ENCODE measurements at regions of chr7 and their contacts with region 1.

Region 1: DNA sequence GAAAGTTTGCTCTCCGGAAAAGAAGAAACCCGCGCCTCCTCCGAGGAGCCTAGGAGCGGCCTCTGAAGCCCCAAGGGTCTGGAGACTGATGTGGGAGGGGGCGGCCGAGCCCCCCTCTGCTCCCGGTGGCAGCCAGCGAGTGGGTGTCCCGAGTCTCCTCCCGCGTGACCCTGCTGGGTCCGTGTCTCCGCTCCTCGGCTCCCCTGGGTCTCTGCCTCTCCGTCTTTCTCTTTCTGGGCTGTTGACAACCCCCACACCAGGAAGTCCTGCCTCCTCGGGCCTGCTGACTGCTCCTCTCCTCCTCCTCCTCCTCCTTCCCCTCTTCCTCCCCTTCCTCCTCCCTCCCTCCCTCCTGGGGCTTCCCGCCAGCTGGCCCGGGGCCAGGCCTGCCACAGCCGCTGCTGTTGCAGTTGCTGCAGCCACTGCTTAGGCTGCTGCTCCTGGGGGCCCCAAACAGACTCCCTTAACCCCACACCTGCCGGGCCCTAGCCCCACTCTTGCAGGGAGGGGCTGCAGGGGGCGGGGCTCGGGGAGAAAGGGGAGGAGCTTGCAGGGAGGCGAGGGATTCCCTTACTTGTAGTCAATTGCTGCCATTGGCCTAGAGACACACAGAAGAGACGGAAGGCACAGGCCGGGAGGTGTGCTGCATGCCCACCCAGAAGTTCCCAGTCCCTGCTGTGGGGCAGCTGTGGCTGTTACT is at the start of gene TSC22D4:
- DNase-seq: peak; percentile 91
- ATAC-seq: peak; percentile 87 to 93
- total RNA-seq, gene TSC22D4: 31.3 to 36.2 TPM

Region 2: GRCh38 chr7:100545360-100546128 is 66.4 kb after region 1 on chr7:
- intact Hi-C with region 1: loop called in 1 of 2 experiments (anchors 5 kb)
- DNase-seq: peak; percentile 52
- ATAC-seq: peak; percentile 77 to 90

Region 3: DNA sequence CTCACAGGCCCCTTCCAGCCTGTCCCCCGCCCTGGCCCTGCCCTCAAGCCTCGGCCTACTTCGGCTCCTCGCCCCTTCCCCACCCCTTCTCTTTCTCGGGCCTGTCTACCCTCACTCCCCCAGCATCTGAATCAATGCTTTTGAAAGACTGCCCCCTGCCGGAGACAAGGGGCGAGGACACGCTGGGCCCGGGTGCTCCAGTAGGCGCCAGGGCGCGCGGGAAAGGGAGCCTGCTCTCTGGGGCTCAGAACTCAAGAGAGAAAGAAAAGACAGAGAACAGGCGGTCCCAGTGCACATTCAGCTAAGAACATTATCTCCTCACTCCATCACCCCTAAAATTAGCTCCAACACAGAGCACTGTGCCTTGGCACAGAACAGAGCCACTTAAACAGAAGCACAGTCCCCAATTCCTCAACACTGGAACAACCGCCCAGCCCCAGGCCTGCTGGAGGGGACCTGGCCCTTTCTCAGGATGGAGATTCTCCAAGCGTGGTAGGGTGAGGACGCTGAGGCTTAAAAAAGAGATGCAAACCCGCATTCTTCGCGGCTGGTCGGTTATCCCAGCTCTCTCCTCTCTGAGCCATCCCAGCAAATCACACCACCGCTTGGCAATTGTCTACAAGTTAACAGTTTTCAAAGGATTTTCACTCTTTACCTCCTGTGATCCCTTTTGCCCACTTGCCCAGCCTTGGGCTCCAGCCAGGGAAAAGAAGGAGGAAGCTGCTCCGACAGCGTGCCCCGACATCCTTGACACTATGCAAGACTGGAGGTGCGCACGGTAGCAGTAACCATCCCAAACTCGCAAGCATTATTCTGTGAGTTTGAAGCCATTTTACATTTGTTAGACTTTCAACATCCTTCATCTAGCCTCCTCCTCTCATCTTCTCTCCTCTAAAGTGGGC is 212.8 kb after region 1 on chr7:
- intact Hi-C with region 1: loop called in 1 of 2 experiments (anchors 5 kb)
- DNase-seq: peak; percentile 82
- ATAC-seq: peak; percentile 77

Measured in left cardiac atrium (tissue), 4 donors.